WTC11 (cell line): ENCODE measurements at regions of chr1 and their contacts with region 1.

Region 1: DNA sequence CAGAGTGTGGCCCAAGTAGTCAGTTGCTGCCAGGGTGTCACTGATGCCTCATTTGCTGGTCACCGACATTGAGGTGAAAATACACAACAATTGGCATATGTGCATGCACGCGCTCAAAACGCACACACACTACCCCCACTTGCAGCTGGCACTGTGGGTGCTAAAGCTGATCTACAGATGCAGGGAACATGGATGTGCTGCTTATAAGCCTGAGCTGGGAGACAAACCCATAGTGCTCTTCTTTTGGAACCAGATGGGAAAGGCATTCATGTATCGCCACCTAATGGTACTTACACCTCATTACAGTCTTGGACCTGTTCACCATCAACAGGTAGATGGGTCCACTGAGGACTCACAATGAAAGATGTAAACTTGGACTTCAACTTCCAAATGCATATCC is 70.3 kb upstream of the CAMK1G start:
- DNase-seq: no peak
- ATAC-seq: peak; percentile 95
- H3K4me3 Mint-ChIP-seq: no peak overlapping the region
- H3K27ac Mint-ChIP-seq: no peak overlapping the region
- H3K4me1 Mint-ChIP-seq: peaks cover 17% of the 10 kb centered on the region
- H3K27me3 Mint-ChIP-seq: no peaks in the 10 kb centered on the region
- CTCF ChIP-seq: peak; percentile 63

Region 2: GRCh38 chr1:209248649-209249279 is 264.5 kb before region 1 on chr1:
- CTCF ChIA-PET with region 1: interaction called, 17 read pairs
- POLR2A ChIA-PET with region 1: no interaction called
- DNase-seq: peak; percentile 62
- ATAC-seq: peak; percentile 88
- H3K4me3 Mint-ChIP-seq: no peak overlapping the region
- H3K27ac Mint-ChIP-seq: peak overlapping the region; percentile 81
- H3K4me1 Mint-ChIP-seq: peaks cover 41% of the 10 kb centered on the region
- H3K27me3 Mint-ChIP-seq: no peaks in the 10 kb centered on the region
- CTCF ChIP-seq: peak; percentile 86

Region 3: GRCh38 chr1:209502818-209503595 is 10.2 kb before region 1 on chr1:
- CTCF ChIA-PET with region 1: interaction called, 19 read pairs
- POLR2A ChIA-PET with region 1: no interaction called
- DNase-seq: no peak
- ATAC-seq: no peak
- H3K4me3 Mint-ChIP-seq: no peak overlapping the region
- H3K27ac Mint-ChIP-seq: no peak overlapping the region
- H3K4me1 Mint-ChIP-seq: peaks cover 13% of the 10 kb centered on the region
- H3K27me3 Mint-ChIP-seq: no peaks in the 10 kb centered on the region
- CTCF ChIP-seq: no peak

Region 4: DNA sequence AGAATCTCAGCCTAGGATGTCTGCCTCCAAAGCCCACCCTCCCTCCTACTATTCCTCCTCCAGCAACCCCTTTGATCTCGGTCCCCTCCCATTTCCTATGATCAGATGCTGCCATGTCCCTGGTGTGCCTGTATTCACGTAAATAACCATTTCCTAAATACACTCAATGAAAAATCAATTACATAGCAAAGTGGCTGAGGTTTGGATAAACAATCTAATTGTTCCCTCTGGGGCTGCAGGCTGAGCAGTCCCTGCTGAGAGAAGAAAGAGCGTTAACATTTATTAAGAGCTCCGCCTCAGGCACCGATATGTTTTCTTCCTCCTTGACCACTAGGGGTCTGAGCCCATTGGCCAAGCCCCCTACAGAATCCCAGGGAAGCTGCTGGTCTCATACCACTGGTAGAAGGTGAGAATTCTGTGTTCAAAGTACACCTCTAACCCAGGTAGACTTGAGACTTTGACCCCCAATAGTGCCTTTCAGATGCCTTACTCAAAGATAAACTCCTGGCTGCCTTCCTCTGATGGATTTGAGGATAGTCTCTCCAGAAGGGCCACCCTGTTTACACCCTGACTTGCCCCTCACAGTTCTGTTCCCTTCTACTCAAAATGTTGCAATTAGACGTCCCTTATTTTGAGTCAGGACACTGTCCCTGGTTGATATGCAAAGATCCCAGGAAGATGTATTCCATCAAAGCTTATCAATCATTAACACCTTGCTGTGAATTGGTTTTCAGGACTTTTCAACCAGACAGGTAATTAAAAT is 36.4 kb after region 1 on chr1:
- CTCF ChIA-PET with region 1: interaction called, 10 read pairs
- POLR2A ChIA-PET with region 1: no interaction called
- DNase-seq: peak; percentile 50
- ATAC-seq: peak; percentile 85
- H3K4me3 Mint-ChIP-seq: peak overlapping the region; percentile 54
- H3K27ac Mint-ChIP-seq: no peak overlapping the region
- H3K4me1 Mint-ChIP-seq: peaks cover 36% of the 10 kb centered on the region
- H3K27me3 Mint-ChIP-seq: peaks cover 55% of the 10 kb centered on the region
- CTCF ChIP-seq: no peak